Heart left ventricle (tissue), 16 donors: ENCODE measurements at regions of chrX and their contacts with region 1.

Region 1: GRCh38 chrX:98755912-98756311 is 1654.2 kb downstream of the PCDH19 start:
- DNase-seq: no peak
- ATAC-seq: no peak
- H3K4me3 ChIP-seq: no peak overlapping the region
- H3K27ac ChIP-seq: no peak overlapping the region
- H3K4me1 ChIP-seq: no peaks in the 10 kb centered on the region
- H3K27me3 ChIP-seq: no peaks in the 10 kb centered on the region
- CTCF ChIP-seq: no peak
- POLR2A ChIP-seq: no peak

Region 2: DNA sequence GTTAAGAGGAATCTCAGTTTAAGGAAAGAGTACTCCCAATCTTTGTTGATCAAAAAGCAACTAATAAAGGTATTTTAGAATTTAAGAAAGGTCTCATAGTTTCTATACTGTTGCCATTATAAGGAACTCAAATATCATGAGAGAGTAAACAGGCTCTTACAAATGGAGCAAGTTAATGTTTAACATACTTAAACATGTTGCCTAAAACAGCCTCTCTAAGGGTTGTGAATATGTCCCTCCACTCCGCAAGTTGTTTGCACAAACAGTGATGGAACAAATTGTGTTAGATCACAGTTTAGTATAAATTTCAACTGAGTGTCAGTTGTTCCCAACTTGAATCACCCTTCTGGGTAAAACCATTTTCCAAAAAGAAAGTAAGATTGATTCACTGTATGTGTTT is 24.1 kb before region 1 on chrX:
- intact Hi-C with region 1: loop called in 1 of 10 experiments (anchors 2 kb)
- DNase-seq: no peak
- ATAC-seq: no peak
- H3K4me3 ChIP-seq: no peak overlapping the region
- H3K27ac ChIP-seq: no peak overlapping the region
- H3K4me1 ChIP-seq: no peaks in the 10 kb centered on the region
- H3K27me3 ChIP-seq: peaks cover 0 to 4% (median 0%) of the 10 kb centered on the region in 9 donors
- CTCF ChIP-seq: no peak
- POLR2A ChIP-seq: no peak

Region 3: DNA sequence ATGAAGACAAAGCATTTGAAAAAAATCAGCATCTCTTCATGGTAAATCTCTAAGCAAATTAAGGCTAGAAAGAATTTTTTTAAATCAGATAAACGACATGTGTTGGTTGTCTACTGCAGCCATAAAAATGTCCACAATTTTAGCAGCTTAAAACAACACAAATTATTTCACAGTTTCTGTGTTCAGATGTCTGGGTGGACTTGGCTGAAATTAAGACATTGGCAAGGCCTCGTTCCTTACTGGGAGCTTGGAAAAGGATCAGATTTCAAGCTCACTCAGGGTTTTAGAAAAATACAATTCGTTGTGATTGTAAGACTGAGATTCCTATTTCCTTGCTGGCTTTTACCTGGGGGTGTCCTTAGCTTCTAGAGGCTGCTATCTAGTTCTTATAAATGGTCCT is 183.5 kb after region 1 on chrX:
- intact Hi-C with region 1: no loop called
- DNase-seq: no peak
- ATAC-seq: no peak
- H3K4me3 ChIP-seq: no peak overlapping the region
- H3K27ac ChIP-seq: no peak overlapping the region
- H3K4me1 ChIP-seq: no peaks in the 10 kb centered on the region
- H3K27me3 ChIP-seq: no peaks in the 10 kb centered on the region
- CTCF ChIP-seq: no peak
- POLR2A ChIP-seq: no peak